ENCODE measurements at regions of chr13 and their contacts with region 1.

Region 1: GRCh38 chr13:79988573-79988972 is 352.4 kb downstream of the SPRY2 start:
- DNase-seq: peak in 1 of 2 experiments; percentile 16
- H3K4me3 ChIP-seq: no peak overlapping the region
- H3K4me3 Mint-ChIP-seq: no peak overlapping the region
- H3K27ac Mint-ChIP-seq: peak overlapping the region; percentile 69
- H3K4me1 ChIP-seq: peaks cover 22% of the 10 kb centered on the region
- H3K4me1 Mint-ChIP-seq: peaks cover 46% of the 10 kb centered on the region
- H3K27me3 ChIP-seq: no peaks in the 10 kb centered on the region
- H3K27me3 Mint-ChIP-seq: no peaks in the 10 kb centered on the region
- CTCF ChIP-seq: no peak

Region 2: DNA sequence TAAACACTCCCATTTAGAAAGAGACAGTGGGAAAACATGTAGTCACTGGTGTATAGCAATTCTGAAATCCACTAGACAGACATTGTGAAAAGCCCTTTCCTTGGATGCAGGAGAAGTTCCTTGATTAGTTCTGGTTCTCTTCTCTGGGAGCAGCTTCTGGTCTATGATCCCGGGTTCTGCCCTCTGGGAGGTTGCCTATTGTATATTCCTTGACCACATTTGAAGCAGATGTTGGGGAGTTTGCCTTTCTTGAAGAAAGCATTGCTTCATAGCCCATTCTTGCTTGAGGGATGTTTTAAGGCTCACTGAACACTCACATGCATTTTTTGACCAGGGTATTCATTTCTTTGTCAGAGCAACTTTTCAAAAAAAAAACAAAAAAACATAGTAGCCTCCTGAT is 295.7 kb before region 1 on chr13:
- CTCF ChIA-PET with region 1: no interaction called
- POLR2A ChIA-PET with region 1: no interaction called
- intact Hi-C with region 1: no loop called
- DNase-seq: no peak
- H3K4me3 ChIP-seq: no peak overlapping the region
- H3K4me3 Mint-ChIP-seq: no peak overlapping the region
- H3K27ac Mint-ChIP-seq: no peak overlapping the region
- H3K4me1 ChIP-seq: no peaks in the 10 kb centered on the region
- H3K4me1 Mint-ChIP-seq: no peaks in the 10 kb centered on the region
- H3K27me3 ChIP-seq: no peaks in the 10 kb centered on the region
- H3K27me3 Mint-ChIP-seq: peaks cover 4% of the 10 kb centered on the region
- CTCF ChIP-seq: no peak

Region 3: GRCh38 chr13:80132741-80133601 is 144.4 kb after region 1 on chr13:
- CTCF ChIA-PET with region 1: no interaction called
- POLR2A ChIA-PET with region 1: no interaction called
- intact Hi-C with region 1: loop called (anchors 5 kb)
- DNase-seq: peak; percentile 87 to 96
- H3K4me3 ChIP-seq: 0 out of 2 replicates have a peak overlapping the region, but pooled peaks have one; percentile 13
- H3K4me3 Mint-ChIP-seq: peak overlapping the region; percentile 74
- H3K27ac Mint-ChIP-seq: peak overlapping the region; percentile 91
- H3K4me1 ChIP-seq: peaks cover 28% of the 10 kb centered on the region
- H3K4me1 Mint-ChIP-seq: peaks cover 24% of the 10 kb centered on the region
- H3K27me3 ChIP-seq: no peaks in the 10 kb centered on the region
- H3K27me3 Mint-ChIP-seq: peaks cover 2% of the 10 kb centered on the region
- CTCF ChIP-seq: no peak

Measured in Caco-2 (cell line).